ENCODE measurements at regions of chr17 and their contacts with region 1.

Region 1: GRCh38 chr17:48037036-48037837 is at the start of gene COPZ2:
- DNase-seq: peak; percentile 75
- H3K4me3 Mint-ChIP-seq: peak within 1 kb of the TSS; percentile 79
- H3K27ac Mint-ChIP-seq: peak within 1 kb of the TSS; percentile 30
- H3K4me1 Mint-ChIP-seq: peaks cover 12% of the 10 kb centered on the region
- H3K27me3 Mint-ChIP-seq: peaks cover 40% of the 10 kb centered on the region
- total RNA-seq, gene COPZ2: 7.4 to 11.5 TPM

Region 2: DNA sequence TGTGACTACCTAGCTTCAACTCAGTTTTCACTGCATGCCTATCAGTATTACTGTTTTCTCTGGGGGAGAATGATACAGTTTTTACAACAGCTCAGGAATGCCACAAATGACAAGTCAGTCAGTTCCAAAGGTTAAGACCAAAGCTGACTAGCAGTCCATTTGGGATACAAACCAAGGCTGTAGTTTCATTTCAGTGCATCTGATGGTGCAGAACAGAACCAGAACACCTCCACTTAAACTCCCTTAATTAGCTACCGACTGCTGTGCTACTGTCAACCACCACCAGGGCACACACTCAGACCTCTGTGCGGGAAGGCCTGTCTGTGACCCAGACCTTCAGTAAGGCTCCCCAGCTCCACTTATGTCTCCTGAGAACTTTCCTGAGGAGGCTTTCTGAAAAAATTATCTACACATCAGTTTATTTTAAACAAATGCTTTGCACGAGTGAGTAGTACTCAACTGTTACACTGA is 31.3 kb after region 1 on chr17:
- CTCF ChIA-PET with region 1: interaction called, 11 read pairs
- POLR2A ChIA-PET with region 1: interaction called, 3 read pairs
- DNase-seq: no peak
- H3K4me3 Mint-ChIP-seq: no peak overlapping the region
- H3K27ac Mint-ChIP-seq: no peak overlapping the region
- H3K4me1 Mint-ChIP-seq: no peaks in the 10 kb centered on the region
- H3K27me3 Mint-ChIP-seq: no peaks in the 10 kb centered on the region